GM23248 (cell line): ENCODE measurements at regions of chr11 and their contacts with region 1.

Region 1: DNA sequence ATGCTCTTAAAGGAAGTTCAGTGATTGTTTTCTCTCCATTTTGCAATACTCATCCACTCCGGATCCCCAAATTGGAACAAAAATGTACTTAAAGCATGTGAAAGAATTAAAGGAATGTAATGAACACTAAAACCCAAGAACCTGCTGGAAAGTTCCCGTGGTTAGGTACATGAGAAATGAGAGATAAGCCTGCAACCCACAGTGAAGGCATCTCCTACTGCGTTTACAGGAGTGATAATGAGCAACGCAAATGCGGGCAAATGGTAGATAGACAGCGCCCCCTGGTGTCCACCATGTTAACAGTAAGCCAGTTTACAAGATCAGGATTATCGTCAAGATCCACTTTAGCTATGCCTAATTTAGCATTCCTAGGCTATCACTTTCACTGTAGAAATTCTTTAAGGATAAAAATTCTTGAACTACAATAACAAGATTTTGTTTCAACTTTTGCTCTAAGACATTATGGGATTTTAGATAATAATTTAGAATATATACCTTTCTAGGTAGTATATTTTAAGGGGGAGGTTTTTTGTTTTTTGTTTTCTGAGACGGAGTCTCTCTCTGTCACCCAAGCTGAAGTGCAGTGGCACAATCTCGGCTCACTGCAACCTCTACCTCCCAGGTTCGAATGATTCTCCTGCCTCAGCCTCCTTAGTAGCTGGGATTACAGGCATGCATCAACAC is 29.9 kb downstream of the ALG9 start:
- DNase-seq: peak; percentile 88
- H3K4me3 ChIP-seq: no peak overlapping the region
- H3K27ac ChIP-seq: peak overlapping the region; percentile 48
- H3K4me1 ChIP-seq: peaks cover 36% of the 10 kb centered on the region
- H3K27me3 ChIP-seq: no peaks in the 10 kb centered on the region

Region 2: GRCh38 chr11:111148953-111149352 is 692.6 kb before region 1 on chr11:
- in situ Hi-C with region 1: no loop called
- DNase-seq: peak; percentile 33
- H3K4me3 ChIP-seq: no peak overlapping the region
- H3K27ac ChIP-seq: no peak overlapping the region
- H3K4me1 ChIP-seq: peaks cover 6% of the 10 kb centered on the region
- H3K27me3 ChIP-seq: no peaks in the 10 kb centered on the region

Region 3: GRCh38 chr11:111454561-111455192 is 386.8 kb before region 1 on chr11:
- in situ Hi-C with region 1: loop called (anchors 10 kb)
- DNase-seq: peak; percentile 85
- H3K4me3 ChIP-seq: no peak overlapping the region
- H3K27ac ChIP-seq: no peak overlapping the region
- H3K4me1 ChIP-seq: peaks cover 6% of the 10 kb centered on the region; the same call in 1 of the 2 replicates
- H3K27me3 ChIP-seq: no peaks in the 10 kb centered on the region

Region 4: DNA sequence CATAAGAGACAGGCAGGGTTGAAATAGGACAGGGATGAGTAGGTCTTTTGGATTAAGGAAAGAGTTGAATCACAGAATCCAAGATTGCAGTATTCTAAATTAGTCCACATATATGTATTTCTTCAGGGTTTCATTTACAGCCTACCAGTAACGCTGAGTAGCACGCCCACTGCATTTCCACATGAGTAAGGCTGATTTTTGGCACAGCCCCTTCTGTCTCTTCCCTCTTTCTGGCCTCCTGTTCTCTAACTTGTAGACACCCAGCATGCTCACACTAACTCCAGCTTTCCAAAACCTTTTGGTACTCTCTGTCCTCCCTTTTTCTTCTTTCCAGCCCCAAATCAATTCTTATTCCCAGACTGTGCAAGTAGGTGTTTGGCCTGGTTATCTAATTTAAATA is 243.0 kb before region 1 on chr11:
- in situ Hi-C with region 1: loop called (anchors 5 kb)
- DNase-seq: peak; percentile 96
- H3K4me3 ChIP-seq: no peak overlapping the region
- H3K27ac ChIP-seq: peak overlapping the region; percentile 51
- H3K4me1 ChIP-seq: peaks cover 16% of the 10 kb centered on the region
- H3K27me3 ChIP-seq: no peaks in the 10 kb centered on the region

Region 5: DNA sequence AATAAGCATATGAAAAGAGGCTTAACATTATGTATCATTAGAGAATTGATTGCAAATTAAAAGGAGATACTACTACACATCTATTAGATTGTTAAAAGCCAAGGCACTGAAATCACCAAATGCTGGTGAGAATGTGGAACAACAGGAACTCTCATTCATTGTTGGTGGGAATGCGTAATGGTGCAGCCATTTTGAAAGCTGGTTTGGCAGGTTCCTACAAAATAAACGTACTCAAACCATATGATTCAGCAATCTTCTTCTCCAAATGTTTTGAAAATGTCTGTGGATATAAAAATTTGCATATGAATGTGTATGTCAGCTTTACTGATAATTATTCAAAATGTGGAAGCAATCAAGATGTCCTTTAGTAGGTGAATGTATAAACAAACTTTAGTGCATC is 595.6 kb after region 1 on chr11:
- in situ Hi-C with region 1: no loop called
- DNase-seq: no peak
- H3K4me3 ChIP-seq: no peak overlapping the region
- H3K27ac ChIP-seq: no peak overlapping the region
- H3K4me1 ChIP-seq: no peaks in the 10 kb centered on the region
- H3K27me3 ChIP-seq: 0 out of 2 replicates have a peak, but pooled peaks cover 8% of the 10 kb centered on the region